ENCODE measurements at regions of chr9 and their contacts with region 1.

Region 1: GRCh38 chr9:127785023-127785932 is 556 bp upstream of the CDK9 start:
- DNase-seq: peak; percentile 97
- H3K4me3 Mint-ChIP-seq: peak overlapping the region; percentile 99
- H3K27ac Mint-ChIP-seq: peak overlapping the region; percentile 98
- H3K4me1 Mint-ChIP-seq: peaks cover 57% of the 10 kb centered on the region
- H3K27me3 Mint-ChIP-seq: no peaks in the 10 kb centered on the region

Region 2: GRCh38 chr9:127770905-127771569 is 14.2 kb before region 1 on chr9:
- intact Hi-C with region 1: loop called (anchors 1 kb)
- DNase-seq: peak; percentile 99
- H3K4me3 Mint-ChIP-seq: peak overlapping the region; percentile 93
- H3K27ac Mint-ChIP-seq: peak overlapping the region; percentile 94
- H3K4me1 Mint-ChIP-seq: peaks cover 58% of the 10 kb centered on the region
- H3K27me3 Mint-ChIP-seq: no peaks in the 10 kb centered on the region

Region 3: GRCh38 chr9:127854184-127854806 is 69.0 kb after region 1 on chr9 and contains the start of gene ENG:
- intact Hi-C with region 1: no loop called
- DNase-seq: peak; percentile 75
- H3K4me3 Mint-ChIP-seq: peak within 1 kb of the TSS; percentile 93
- H3K27ac Mint-ChIP-seq: peak within 1 kb of the TSS; percentile 89
- H3K4me1 Mint-ChIP-seq: peaks cover 22% of the 10 kb centered on the region
- H3K27me3 Mint-ChIP-seq: no peaks in the 10 kb centered on the region
- total RNA-seq, gene ENG: 29.9 and 32.4 TPM in 2 replicates

Region 4: DNA sequence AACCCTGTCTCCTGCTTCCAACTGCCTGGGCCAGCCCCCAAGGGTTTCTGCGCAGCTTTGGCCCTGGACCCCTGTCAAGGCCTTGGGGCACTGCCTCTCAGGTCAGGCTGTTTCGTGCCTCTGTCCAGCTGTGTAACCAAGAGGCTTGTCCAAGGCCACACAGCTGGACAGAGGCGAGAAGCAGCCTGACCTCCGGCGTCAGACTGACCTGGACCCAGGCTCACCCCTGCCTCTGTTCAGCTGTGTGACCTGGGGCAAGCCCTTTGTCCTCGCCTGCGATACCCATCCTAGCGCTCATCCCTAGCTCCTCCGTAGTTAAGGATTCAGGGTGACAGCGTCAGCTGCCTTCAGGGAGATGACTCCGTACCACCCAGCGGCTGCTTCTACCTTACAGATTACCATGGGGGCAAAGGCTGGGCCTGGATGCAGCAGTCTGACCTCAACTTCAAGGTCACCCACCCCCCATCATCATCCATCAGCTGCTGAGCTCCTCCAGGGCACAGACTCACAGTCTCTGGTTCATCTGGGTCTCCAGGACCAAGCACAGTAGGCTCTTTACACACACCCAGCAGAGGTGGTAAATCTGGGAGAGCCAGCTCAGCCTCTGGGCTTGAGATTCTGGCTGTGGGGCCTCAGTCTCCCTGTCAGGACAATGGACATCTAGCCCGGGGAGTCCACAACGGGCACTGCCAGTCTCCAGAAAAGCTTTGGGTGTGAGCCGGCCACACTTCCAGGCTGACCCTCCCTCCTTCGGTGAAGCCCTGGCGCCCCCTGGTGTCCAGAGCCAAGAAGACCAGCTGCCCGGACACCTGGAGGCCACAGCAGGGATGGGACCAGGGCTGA is 84.3 kb after region 1 on chr9:
- intact Hi-C with region 1: loop called (anchors 5 kb)
- DNase-seq: peak; percentile 95
- H3K4me3 Mint-ChIP-seq: no peak overlapping the region
- H3K27ac Mint-ChIP-seq: no peak overlapping the region
- H3K4me1 Mint-ChIP-seq: peaks cover 11% of the 10 kb centered on the region
- H3K27me3 Mint-ChIP-seq: no peaks in the 10 kb centered on the region

Region 5: DNA sequence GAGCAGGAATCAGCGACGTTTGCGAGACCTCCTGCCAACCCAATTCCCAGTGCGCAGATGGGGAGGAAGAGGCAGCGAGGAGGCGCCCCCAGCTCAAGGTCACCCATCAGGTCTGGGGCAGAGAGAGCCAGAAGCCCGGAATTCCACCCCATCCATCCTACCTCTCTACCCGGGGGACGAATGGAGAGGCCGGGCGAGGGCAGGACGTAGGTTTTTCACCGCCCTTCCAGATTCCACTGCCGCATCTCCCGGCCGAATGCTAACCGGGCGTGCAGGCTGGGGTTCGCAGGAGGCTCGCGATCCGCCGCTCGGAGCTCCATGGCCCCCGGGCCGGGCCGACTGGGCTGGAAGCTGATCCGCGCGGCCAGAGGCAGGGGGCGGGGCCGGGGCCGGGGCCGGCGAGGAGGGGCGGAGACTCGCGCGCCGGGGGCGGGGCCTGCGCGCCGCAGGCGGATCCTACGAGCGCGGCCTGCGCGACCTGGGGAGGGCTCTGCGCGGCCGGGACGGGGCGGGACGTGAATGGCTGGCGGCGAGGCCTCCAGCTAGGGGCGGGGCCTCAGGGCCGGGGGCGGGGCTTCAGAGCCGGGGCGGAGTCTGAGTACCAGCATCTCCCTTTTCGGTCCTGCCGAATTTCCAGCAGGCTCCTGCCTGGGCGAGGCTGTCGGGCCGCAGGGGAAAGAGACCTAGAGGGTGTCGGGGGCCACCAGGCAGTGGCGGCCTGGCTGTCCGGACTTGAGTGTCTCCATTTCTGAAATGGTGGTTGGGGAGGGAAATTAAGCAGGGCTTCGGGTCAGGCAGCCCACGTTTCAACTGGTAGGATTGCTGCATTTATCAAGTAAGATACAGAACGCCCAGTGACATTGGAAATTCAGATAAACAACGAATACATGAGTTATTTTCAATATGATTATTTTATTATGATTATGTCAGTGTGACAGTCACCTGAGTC is 131.7 kb after region 1 on chr9 and contains the start of gene ST6GALNAC4:
- intact Hi-C with region 1: loop called (anchors 5 kb)
- DNase-seq: peak; percentile 98
- H3K4me3 Mint-ChIP-seq: peak within 1 kb of the TSS; percentile 86
- H3K27ac Mint-ChIP-seq: peak within 1 kb of the TSS; percentile 87
- H3K4me1 Mint-ChIP-seq: peaks cover 44% of the 10 kb centered on the region
- H3K27me3 Mint-ChIP-seq: peaks cover under 1% of the 10 kb centered on the region
- total RNA-seq, gene ST6GALNAC4: 28.0 and 28.3 TPM in 2 replicates

Region 6: GRCh38 chr9:128067876-128068613 is 282.8 kb after region 1 on chr9 and contains the start of gene SLC25A25:
- intact Hi-C with region 1: loop called (anchors 10 kb)
- DNase-seq: peak; percentile 100
- H3K4me3 Mint-ChIP-seq: peak within 1 kb of the TSS; percentile 93
- H3K27ac Mint-ChIP-seq: peak within 1 kb of the TSS; percentile 84
- H3K4me1 Mint-ChIP-seq: peaks cover 43% of the 10 kb centered on the region
- H3K27me3 Mint-ChIP-seq: no peaks in the 10 kb centered on the region
- total RNA-seq, gene SLC25A25: 12.2 and 14.0 TPM in 2 replicates

Measured in activated CD4-positive, alpha-beta T cell treated with anti-CD3 and anti-CD28 coated beads, Interleukin-2, amount 10 ng/mL, durations not matched to agents 24 days and 14 days (primary cell).